ENCODE measurements at regions of chr5 and their contacts with region 1.

Region 1: DNA sequence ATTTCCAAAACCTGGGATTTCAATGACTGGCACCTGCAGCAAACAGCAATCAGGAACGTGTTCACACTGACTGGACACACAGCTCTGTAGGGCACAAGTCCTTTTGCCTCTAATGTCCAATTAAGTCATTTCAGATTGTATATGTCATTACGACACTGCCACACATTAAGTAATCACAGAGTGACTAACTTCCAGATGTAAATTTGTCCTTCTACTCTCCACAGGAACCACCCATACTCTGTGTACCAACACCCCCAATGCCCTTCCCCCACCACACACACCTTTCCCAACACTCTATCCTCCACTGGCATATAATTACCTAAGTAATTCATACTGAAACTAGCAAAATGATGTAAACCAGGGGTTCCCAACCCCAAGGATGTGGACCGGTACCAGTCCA is 30.5 kb downstream of the LARS1 start:
- DNase-seq: no peak
- ATAC-seq: no peak
- H3K4me3 ChIP-seq: no peak overlapping the region
- H3K27ac ChIP-seq: no peak overlapping the region
- H3K4me1 ChIP-seq: no peaks in the 10 kb centered on the region
- H3K27me3 ChIP-seq: no peaks in the 10 kb centered on the region

Region 2: DNA sequence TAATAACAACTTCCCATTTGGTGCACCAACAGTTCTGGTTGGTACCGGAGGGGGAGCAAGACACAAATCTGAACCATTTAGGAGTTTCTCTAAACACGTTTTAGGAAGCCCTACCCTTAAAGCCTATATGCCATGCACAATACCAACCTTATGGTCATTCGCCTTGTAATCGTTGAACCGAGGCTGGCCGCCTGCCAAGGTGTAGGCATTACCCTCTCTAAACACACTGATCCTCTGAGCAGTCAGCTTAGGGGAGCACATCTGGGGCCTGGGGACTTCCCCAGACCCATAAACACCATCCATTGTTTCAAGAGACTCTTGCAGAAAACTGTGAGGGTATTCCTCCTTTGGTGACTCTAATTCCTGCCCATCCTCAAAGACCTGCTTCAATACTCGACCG is 279.5 kb before region 1 on chr5:
- intact Hi-C with region 1: no loop called
- DNase-seq: peak in 2 of 3 donors; percentile 29 to 47
- ATAC-seq: no peak
- H3K4me3 ChIP-seq: no peak overlapping the region
- H3K27ac ChIP-seq: no peak overlapping the region
- H3K4me1 ChIP-seq: no peaks in the 10 kb centered on the region
- H3K27me3 ChIP-seq: no peaks in the 10 kb centered on the region

Region 3: GRCh38 chr5:146273109-146273508 is 121.1 kb after region 1 on chr5:
- intact Hi-C with region 1: loop called in 1 of 4 experiments (anchors 10 kb)
- DNase-seq: no peak
- ATAC-seq: no peak
- H3K4me3 ChIP-seq: no peak overlapping the region
- H3K27ac ChIP-seq: no peak overlapping the region
- H3K4me1 ChIP-seq: no peaks in the 10 kb centered on the region
- H3K27me3 ChIP-seq: no peaks in the 10 kb centered on the region

Measured in right cardiac atrium (tissue), 5 donors.